ENCODE measurements at regions of chr16 and their contacts with region 1.

Region 1: DNA sequence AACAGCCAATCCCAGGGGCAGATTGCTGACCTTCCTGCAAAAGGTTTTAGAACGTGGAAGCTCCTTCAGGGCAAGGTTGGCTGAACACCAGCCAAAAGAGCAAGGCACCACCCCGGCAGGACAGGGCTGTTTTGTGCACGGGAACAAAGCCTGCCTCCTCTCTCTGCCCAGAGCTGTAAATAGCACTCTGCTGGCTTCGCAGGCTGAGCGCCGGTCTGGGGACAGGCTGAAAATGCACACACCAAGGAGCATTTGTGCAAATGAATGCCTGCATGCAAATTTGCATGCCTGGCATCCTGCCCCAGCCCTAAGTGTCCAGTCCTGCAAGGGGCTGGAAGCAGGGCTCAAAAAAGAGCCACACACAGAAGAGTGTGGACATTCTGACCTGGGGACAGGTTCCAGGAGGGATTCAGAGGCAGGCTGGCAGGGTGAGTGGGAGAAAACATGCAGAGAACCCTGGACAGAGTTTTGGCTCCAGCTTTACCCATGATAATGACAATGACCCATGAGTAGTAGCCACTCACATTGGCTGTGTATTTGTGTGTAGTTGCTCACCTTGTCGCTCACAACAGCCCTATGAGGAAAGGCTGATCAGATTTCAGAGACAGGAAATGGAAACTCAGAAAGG is 11.7 kb downstream of the ABAT start:
- DNase-seq: peak; percentile 52 to 71 (median 65)
- ATAC-seq: peak; percentile 47
- H3K4me3 ChIP-seq: no peak overlapping the region
- H3K27ac ChIP-seq: peak overlapping the region; percentile 27 to 64 (median 48)
- H3K4me1 ChIP-seq: peaks cover 60% of the 10 kb centered on the region
- H3K27me3 ChIP-seq: no peaks in the 10 kb centered on the region
- CTCF ChIP-seq: no peak
- POLR2A ChIP-seq: no peak

Region 2: GRCh38 chr16:8729779-8730334 is 43.7 kb after region 1 on chr16:
- intact Hi-C with region 1: loop called (anchors 10 kb)
- DNase-seq: no peak
- ATAC-seq: peak; percentile 14
- H3K4me3 ChIP-seq: no peak overlapping the region
- H3K27ac ChIP-seq: peak overlapping the region; percentile 69 to 84 (median 75)
- H3K4me1 ChIP-seq: peaks cover 36% of the 10 kb centered on the region
- H3K27me3 ChIP-seq: no peaks in the 10 kb centered on the region
- CTCF ChIP-seq: no peak
- POLR2A ChIP-seq: no peak

Region 3: DNA sequence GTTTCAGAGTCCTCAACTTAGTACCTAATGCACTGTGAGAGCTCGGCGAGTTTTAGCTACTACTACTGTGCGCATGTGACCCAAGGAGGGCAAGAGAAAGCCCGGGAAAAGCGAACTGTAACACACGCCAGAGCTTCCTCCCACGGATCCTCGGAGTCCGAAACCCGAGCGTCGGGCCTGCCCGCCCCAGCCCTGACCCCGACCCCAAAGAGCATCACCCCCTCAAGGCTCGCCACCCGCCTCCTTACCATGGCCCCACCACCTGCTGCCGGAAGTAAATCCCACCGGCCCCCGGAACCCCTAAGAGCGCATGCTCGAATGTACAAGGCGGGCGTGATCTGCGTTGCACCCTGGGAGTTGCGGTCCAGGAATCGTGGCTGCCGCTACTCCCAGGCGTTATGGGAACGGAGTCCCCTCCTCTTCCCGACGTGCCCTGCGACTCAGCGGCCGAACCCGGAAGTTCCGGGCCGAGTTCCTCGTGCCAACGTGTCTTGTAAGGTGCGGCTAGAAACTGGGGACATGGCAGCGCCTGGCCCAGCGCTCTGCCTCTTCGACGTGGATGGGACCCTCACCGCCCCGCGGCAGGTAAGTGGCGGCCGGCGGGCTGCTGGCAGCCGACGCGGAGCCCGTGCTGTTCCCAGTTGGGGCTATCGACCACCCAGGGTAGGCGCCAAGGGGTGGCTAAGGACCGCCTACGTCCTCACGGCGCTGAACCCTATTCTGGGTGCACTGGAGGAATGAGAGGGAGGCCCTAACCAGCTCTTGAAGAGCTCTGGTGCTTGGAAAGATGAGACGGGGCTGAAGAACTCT is 111.5 kb after region 1 on chr16 and contains the starts of genes PMM2 and TMEM186:
- intact Hi-C with region 1: no loop called
- DNase-seq: peak; percentile 95 to 98 (median 96)
- ATAC-seq: peak; percentile 98
- H3K4me3 ChIP-seq: peak within 1 kb of the TSS; percentile 90 to 99
- H3K27ac ChIP-seq: peak within 1 kb of the TSS; percentile 70 to 93 (median 88)
- H3K4me1 ChIP-seq: peaks cover 54% of the 10 kb centered on the region
- H3K27me3 ChIP-seq: no peaks in the 10 kb centered on the region
- CTCF ChIP-seq: peak in 1 of 7 experiments; percentile 15
- POLR2A ChIP-seq: peak; percentile 32 to 84 (median 80)
- total RNA-seq, gene PMM2: 34.8 to 127 TPM
- total RNA-seq, gene TMEM186: 0.99 to 3.6 TPM